Naive thymus-derived CD4-positive, alpha-beta T cell (primary cell): ENCODE measurements at regions of chr6 and their contacts with region 1.

Region 1: GRCh38 chr6:6008648-6009421 is 2.1 kb upstream of the NRN1 start:
- DNase-seq: peak in 3 of 9 donors; percentile 18 to 71 (median 23)
- ATAC-seq: peak; percentile 66
- H3K4me3 ChIP-seq: peak overlapping the region; percentile 36
- H3K4me3 Mint-ChIP-seq: peak overlapping the region; percentile 32 to 87 (median 80)
- H3K27ac ChIP-seq: no peak overlapping the region
- H3K27ac Mint-ChIP-seq: no peak overlapping the region
- H3K4me1 ChIP-seq: peaks cover 20 to 36% of the 10 kb centered on the region in 2 donors
- H3K4me1 Mint-ChIP-seq: peaks cover 27 to 52% (median 44%) of the 10 kb centered on the region in 7 donors
- H3K27me3 ChIP-seq: peaks cover 43 to 45% of the 10 kb centered on the region in 2 donors
- H3K27me3 Mint-ChIP-seq: peaks cover 68 to 82% (median 70%) of the 10 kb centered on the region in 5 donors

Region 2: DNA sequence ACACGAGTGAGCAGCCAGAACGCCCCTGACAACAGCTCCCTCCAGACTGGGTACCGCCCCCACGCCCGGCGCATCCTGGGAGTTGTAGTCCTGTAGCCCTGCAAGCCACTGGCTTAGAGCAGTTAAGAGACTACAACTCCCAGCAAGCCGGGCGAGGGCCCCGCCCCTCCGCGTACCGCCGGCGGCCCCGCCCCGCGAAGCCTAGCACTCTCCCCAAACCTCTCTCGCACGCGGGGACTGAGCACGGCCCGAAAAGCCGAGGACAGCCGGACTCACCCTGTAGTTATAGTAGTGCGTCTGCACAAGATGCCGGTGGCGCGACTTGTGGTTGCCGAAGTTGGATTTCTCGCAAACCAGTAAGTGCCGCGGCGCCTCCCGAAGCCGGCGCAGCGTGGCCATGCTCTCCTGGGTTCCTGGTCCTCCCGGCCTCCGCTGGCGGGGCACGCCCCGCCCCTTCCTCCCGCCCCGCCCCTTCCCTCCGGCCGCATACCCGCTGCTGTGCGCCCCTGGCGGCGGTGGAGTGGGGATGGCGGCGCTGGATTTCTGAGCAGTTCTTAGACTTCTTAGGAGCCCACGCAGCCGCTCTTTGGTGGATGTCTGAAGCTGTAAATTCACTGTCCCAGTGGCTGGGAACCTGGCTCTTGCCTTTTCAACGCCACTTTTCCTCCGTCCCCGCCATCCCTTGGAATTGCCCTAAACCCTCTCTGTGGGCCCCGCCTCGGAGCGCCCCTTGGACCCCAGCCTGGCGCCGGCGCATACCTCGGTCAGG is 1005.0 kb before region 1 on chr6 and contains the start of gene RPP40:
- CTCF ChIA-PET with region 1: no interaction called
- POLR2A ChIA-PET with region 1: no interaction called
- intact Hi-C with region 1: loop called in 1 of 2 experiments (anchors 5 kb)
- DNase-seq: peak; percentile 97 to 99 (median 99)
- ATAC-seq: peak; percentile 97
- H3K4me3 ChIP-seq: peak within 1 kb of the TSS; percentile 91
- H3K4me3 Mint-ChIP-seq: peak within 1 kb of the TSS; percentile 88 to 95 (median 94)
- H3K27ac ChIP-seq: peak within 1 kb of the TSS; percentile 82
- H3K27ac Mint-ChIP-seq: peak within 1 kb of the TSS; percentile 91 to 98 (median 94)
- H3K4me1 ChIP-seq: peaks cover 9% of the 10 kb centered on the region in 2 donors
- H3K4me1 Mint-ChIP-seq: peaks cover 0 to 20% (median 13%) of the 10 kb centered on the region in 7 donors
- H3K27me3 ChIP-seq: no peaks in the 10 kb centered on the region
- H3K27me3 Mint-ChIP-seq: no peaks in the 10 kb centered on the region
- total RNA-seq, gene RPP40: 3.8 to 8.0 (median 5.1) TPM

Region 3: DNA sequence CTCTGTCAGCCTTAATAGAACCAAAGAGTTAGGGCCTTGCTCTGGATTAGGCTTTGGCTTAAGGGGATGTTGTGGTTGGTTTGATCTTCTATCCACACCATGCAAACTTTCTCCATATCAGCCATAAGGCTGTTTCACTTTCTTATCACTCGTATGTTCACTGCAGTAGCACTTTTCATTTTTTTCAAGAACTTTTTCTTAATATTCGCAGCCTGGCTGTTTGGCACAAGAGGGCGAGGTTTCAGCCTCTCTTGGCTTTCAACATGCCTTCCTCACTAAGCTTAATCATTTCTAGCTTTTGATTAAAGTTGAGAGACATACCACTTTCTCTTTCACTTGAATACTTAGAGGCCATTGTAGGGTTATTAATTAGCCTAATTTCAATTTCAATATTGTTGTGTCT is 195.2 kb before region 1 on chr6:
- CTCF ChIA-PET with region 1: no interaction called
- POLR2A ChIA-PET with region 1: no interaction called
- intact Hi-C with region 1: loop called in 1 of 2 experiments (anchors 5 kb)
- DNase-seq: peak in 2 of 9 donors; percentile 13 to 29
- ATAC-seq: no peak
- H3K4me3 ChIP-seq: no peak overlapping the region
- H3K4me3 Mint-ChIP-seq: peak overlapping the region; percentile 1 to 65 (median 52)
- H3K27ac ChIP-seq: no peak overlapping the region
- H3K27ac Mint-ChIP-seq: peak overlapping the region; percentile 2 to 90 (median 71)
- H3K4me1 ChIP-seq: peaks cover 4 to 12% of the 10 kb centered on the region in 2 donors
- H3K4me1 Mint-ChIP-seq: peaks cover 18 to 39% (median 28%) of the 10 kb centered on the region in 7 donors
- H3K27me3 ChIP-seq: no peaks in the 10 kb centered on the region
- H3K27me3 Mint-ChIP-seq: peaks cover 0 to 3% (median 0%) of the 10 kb centered on the region in 5 donors

Region 4: GRCh38 chr6:6246544-6246943 is 237.7 kb after region 1 on chr6:
- CTCF ChIA-PET with region 1: no interaction called
- POLR2A ChIA-PET with region 1: no interaction called
- intact Hi-C with region 1: no loop called
- DNase-seq: no peak
- ATAC-seq: no peak
- H3K4me3 ChIP-seq: no peak overlapping the region
- H3K4me3 Mint-ChIP-seq: no peak overlapping the region
- H3K27ac ChIP-seq: no peak overlapping the region
- H3K27ac Mint-ChIP-seq: peak overlapping the region in 1 of 9 donors; percentile 9
- H3K4me1 ChIP-seq: no peaks in the 10 kb centered on the region
- H3K4me1 Mint-ChIP-seq: peaks cover 0 to 3% (median 0%) of the 10 kb centered on the region in 7 donors
- H3K27me3 ChIP-seq: no peaks in the 10 kb centered on the region
- H3K27me3 Mint-ChIP-seq: peaks cover 11 to 60% (median 38%) of the 10 kb centered on the region in 5 donors

Region 5: GRCh38 chr6:7140631-7141378 is 1132.0 kb after region 1 on chr6:
- CTCF ChIA-PET with region 1: no interaction called
- POLR2A ChIA-PET with region 1: no interaction called
- intact Hi-C with region 1: loop called in 1 of 2 experiments (anchors 10 kb)
- DNase-seq: peak; percentile 69 to 86 (median 78)
- ATAC-seq: peak; percentile 89
- H3K4me3 ChIP-seq: peak overlapping the region; percentile 73
- H3K4me3 Mint-ChIP-seq: peak overlapping the region; percentile 80 to 92 (median 88)
- H3K27ac ChIP-seq: peak overlapping the region; percentile 91
- H3K27ac Mint-ChIP-seq: peak overlapping the region; percentile 85 to 99 (median 96)
- H3K4me1 ChIP-seq: peaks cover 22 to 51% of the 10 kb centered on the region in 2 donors
- H3K4me1 Mint-ChIP-seq: peaks cover 45 to 91% (median 85%) of the 10 kb centered on the region in 7 donors
- H3K27me3 ChIP-seq: no peaks in the 10 kb centered on the region
- H3K27me3 Mint-ChIP-seq: no peaks in the 10 kb centered on the region

Region 6: GRCh38 chr6:7725849-7726415 is 1717.1 kb after region 1 on chr6 and contains the start of gene BMP6:
- CTCF ChIA-PET with region 1: no interaction called
- POLR2A ChIA-PET with region 1: no interaction called
- intact Hi-C with region 1: loop called in 1 of 2 experiments (anchors 10 kb)
- DNase-seq: peak in 7 of 9 donors; percentile 10 to 73 (median 24)
- ATAC-seq: peak; percentile 79
- H3K4me3 ChIP-seq: peak within 1 kb of the TSS; percentile 20
- H3K4me3 Mint-ChIP-seq: peak within 1 kb of the TSS; percentile 58 to 90 (median 79)
- H3K27ac ChIP-seq: no peak within 1 kb of the TSS
- H3K27ac Mint-ChIP-seq: no peak within 1 kb of the TSS
- H3K4me1 ChIP-seq: peaks cover 0 to 7% of the 10 kb centered on the region in 2 donors
- H3K4me1 Mint-ChIP-seq: peaks cover 13 to 24% (median 22%) of the 10 kb centered on the region in 7 donors
- H3K27me3 ChIP-seq: peaks cover 8 to 20% of the 10 kb centered on the region in 2 donors
- H3K27me3 Mint-ChIP-seq: peaks cover 61 to 78% (median 62%) of the 10 kb centered on the region in 5 donors
- total RNA-seq, gene BMP6: 0.37 to 0.56 TPM in 2 of 5 experiments, not detected in the others